ENCODE measurements at regions of chr2 and their contacts with region 1.

Region 1: DNA sequence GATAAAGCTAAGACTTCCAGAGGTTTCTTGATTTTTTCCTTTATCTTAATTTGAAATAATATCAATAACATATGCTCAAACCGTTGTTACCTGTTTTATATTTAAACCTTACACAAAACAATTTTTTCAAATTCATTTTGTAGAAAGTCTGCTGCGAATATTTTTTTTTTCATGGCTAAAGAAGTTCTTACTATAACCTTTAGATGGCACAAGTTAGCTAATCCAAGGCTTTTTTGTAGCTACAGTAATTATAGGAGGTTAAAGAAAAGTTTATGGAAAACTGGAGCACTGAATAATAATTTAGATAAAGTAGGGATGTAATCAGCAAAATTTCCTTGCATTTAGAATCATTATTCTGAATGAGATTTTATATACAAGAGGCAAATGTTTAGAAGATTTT is 78.0 kb upstream of the PNPT1 start:
- DNase-seq: peak in 2 of 4 experiments; percentile 11 to 13
- ATAC-seq: no peak
- H3K4me3 ChIP-seq: no peak overlapping the region
- H3K27ac ChIP-seq: no peak overlapping the region
- H3K4me1 ChIP-seq: no peaks in the 10 kb centered on the region
- H3K27me3 ChIP-seq: peaks cover 0 to 3% of the 10 kb centered on the region in 2 experiments; a peak in 1 of 5 replicates
- CTCF ChIP-seq: peak in 2 of 3 experiments; percentile 33 to 68; a peak in 3 of 6 replicates
- EP300 ChIP-seq: no peak
- POLR2A ChIP-seq: no peak
- RAD21 ChIP-seq: peak; percentile 85 to 88

Region 2: DNA sequence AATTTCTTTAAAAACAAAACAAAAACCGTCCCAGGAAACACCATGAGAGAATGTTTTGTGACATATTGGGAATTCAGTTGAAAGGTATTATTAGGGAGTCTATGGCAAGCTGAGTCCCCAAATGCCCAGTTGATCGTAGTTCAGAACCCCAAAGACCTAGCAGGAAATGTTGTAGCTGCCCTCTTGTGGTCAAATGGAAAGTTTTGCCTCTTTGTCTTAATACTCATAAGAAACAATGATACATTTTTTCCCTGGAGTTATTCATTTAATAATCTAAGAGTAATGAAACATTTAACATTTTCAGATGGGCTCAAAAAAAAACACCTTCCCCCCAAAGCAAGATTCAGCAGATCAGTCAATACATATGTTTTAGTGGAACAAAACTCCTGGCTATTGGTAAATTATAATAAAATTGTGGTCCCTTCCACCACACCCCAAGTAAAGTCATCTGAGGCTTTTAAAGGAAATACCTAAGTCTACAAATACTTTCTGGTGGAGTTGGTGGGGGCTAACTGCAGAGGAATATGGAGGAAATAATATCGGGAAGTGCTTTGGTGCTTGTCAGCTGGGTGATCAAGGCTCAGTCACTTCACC is 189.8 kb after region 1 on chr2:
- CTCF ChIA-PET with region 1: interaction called, 16 read pairs
- POLR2A ChIA-PET with region 1: no interaction called
- in situ Hi-C with region 1: no loop called
- intact Hi-C with region 1: loop called (anchors 5 kb)
- DNase-seq: peak; percentile 31 to 48 (median 40)
- ATAC-seq: peak; percentile 76
- H3K4me3 ChIP-seq: no peak overlapping the region
- H3K27ac ChIP-seq: no peak overlapping the region
- H3K4me1 ChIP-seq: no peaks in the 10 kb centered on the region; a peak in 1 of 5 replicates
- H3K27me3 ChIP-seq: no peaks in the 10 kb centered on the region; a peak in 1 of 5 replicates
- CTCF ChIP-seq: peak; percentile 37 to 69 (median 52); a peak in 5 of 6 replicates
- EP300 ChIP-seq: no peak
- POLR2A ChIP-seq: no peak
- RAD21 ChIP-seq: peak; percentile 69 to 77

Region 3: GRCh38 chr2:55970500-55970899 is 198.9 kb after region 1 on chr2:
- CTCF ChIA-PET with region 1: no interaction called
- POLR2A ChIA-PET with region 1: no interaction called
- in situ Hi-C with region 1: loop called (anchors 5 kb)
- intact Hi-C with region 1: no loop called
- DNase-seq: no peak
- ATAC-seq: no peak
- H3K4me3 ChIP-seq: no peak overlapping the region
- H3K27ac ChIP-seq: no peak overlapping the region
- H3K4me1 ChIP-seq: no peaks in the 10 kb centered on the region; a peak in 1 of 5 replicates
- H3K27me3 ChIP-seq: no peaks in the 10 kb centered on the region; a peak in 1 of 5 replicates
- CTCF ChIP-seq: no peak
- EP300 ChIP-seq: no peak
- POLR2A ChIP-seq: no peak
- RAD21 ChIP-seq: no peak

Region 4: DNA sequence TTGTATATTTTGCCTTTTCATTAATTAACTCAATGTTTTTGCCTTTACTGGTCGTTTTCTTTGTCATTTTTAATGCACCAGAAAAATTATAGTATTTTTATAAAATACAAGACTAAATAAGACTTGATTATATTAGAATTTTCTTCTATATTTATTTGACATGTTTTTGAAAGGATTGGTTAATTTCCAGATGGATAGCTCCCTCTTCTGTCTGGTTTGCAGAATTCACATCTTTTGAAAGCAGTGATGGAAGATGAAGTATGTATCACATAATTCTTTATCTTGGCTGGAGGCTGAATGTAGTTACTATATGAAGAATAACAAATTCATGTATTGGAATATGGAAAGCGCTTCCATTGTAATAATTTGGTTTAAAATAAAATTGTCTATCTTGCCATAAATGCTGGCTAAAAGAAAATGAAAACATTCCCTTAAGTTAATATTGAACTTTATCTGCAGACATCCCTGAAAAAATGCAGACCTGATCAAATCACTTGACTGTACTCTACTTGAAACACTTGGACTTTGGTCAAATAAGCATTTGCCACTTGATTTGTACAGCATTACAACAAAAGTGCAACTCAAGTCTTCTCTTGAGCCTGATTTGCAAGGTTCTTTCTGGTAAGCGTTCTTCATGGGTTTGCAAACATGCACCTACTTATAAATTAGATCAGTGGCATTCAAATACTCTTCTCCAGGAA is 238.3 kb after region 1 on chr2:
- CTCF ChIA-PET with region 1: interaction called, 10 read pairs
- POLR2A ChIA-PET with region 1: no interaction called
- in situ Hi-C with region 1: no loop called
- intact Hi-C with region 1: loop called (anchors 5 kb)
- DNase-seq: peak in 2 of 4 experiments; percentile 12 to 21
- ATAC-seq: no peak
- H3K4me3 ChIP-seq: no peak overlapping the region
- H3K27ac ChIP-seq: no peak overlapping the region
- H3K4me1 ChIP-seq: no peaks in the 10 kb centered on the region
- H3K27me3 ChIP-seq: no peaks in the 10 kb centered on the region
- CTCF ChIP-seq: peak in 2 of 3 experiments; percentile 25 to 66; a peak in 3 of 6 replicates
- EP300 ChIP-seq: no peak
- POLR2A ChIP-seq: no peak
- RAD21 ChIP-seq: peak; percentile 73 to 78

Measured in K562 (cell line).